Naive thymus-derived CD4-positive, alpha-beta T cell (primary cell): ENCODE measurements at regions of chr7 and their contacts with region 1.

Region 1: DNA sequence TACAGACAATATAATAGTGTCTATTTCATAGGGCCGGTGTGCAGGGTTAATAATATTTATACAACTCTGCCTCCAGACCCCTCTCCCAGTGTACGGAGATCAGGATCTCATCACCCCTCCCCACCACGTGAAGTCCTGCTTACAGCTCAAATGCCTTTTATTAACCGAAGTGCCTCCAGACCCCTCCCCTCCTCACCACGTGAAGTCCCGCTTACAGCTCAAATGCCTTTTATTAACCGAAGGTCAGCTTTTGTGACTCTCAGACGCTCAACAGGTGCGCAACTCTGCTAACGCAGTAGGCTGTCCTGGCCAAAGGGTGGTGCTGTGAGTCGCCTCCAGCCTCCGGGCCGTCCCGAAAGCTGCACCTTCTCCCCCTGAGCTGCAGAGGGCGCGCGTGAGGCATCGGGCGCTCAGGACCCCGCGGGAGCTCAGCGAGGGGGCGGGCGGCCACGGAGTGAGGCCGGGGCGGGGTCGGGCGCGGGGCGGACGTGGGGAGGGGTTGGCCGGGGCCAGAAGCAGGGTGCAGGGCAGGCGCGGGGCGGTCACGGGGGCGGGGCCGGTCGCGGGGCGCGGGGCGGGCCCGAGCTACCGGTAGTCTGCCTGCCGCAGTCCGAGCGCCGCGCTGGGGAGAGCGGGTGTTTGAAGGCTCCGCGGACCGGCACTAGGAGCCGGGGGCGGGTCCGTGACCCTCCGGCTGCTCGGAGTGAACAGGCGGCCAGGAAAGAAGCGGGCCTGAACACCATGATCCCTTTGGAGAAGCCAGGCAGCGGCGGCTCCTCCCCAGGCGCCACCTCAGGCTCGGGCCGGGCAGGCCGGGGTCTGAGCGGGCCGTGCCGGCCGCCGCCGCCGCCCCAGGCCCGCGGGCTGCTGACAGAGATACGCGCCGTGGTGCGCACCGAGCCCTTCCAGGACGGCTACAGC is at the start of gene STK17A:
- DNase-seq: peak; percentile 91 to 100 (median 95)
- ATAC-seq: peak; percentile 93
- H3K4me3 ChIP-seq: peak within 1 kb of the TSS; percentile 79
- H3K4me3 Mint-ChIP-seq: peak within 1 kb of the TSS; percentile 96 to 100 (median 98)
- H3K27ac ChIP-seq: peak within 1 kb of the TSS; percentile 96
- H3K27ac Mint-ChIP-seq: peak within 1 kb of the TSS; percentile 89 to 100 (median 95)
- H3K4me1 ChIP-seq: peaks cover 8 to 10% of the 10 kb centered on the region in 2 donors
- H3K4me1 Mint-ChIP-seq: peaks cover 10 to 33% (median 13%) of the 10 kb centered on the region in 7 donors
- H3K27me3 ChIP-seq: no peaks in the 10 kb centered on the region
- H3K27me3 Mint-ChIP-seq: peaks cover 0 to 22% (median 6%) of the 10 kb centered on the region in 5 donors
- total RNA-seq, gene STK17A: 71.3 to 132 (median 95.8) TPM

Region 2: DNA sequence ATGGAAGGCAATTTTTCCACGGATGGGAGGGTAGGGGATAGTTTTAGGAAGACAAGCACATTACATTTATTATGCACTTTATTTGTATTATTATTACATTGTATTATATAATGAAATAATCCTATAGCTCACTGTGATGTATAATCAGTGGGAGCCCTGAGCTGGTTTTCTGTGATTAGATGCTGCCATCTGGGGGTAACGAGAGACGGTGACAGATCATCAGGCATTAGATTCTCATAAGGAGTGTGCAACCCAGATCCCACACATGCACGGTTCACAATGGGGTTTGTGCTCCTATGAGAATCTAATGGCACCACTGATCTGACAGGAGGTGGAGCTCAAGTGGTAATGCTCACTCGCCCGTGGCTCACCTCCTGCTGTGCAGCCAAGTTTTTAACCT is 103.7 kb before region 1 on chr7:
- CTCF ChIA-PET with region 1: no interaction called
- POLR2A ChIA-PET with region 1: no interaction called
- intact Hi-C with region 1: no loop called
- DNase-seq: no peak
- ATAC-seq: no peak
- H3K4me3 ChIP-seq: no peak overlapping the region
- H3K4me3 Mint-ChIP-seq: no peak overlapping the region
- H3K27ac ChIP-seq: no peak overlapping the region
- H3K27ac Mint-ChIP-seq: no peak overlapping the region
- H3K4me1 ChIP-seq: no peaks in the 10 kb centered on the region
- H3K4me1 Mint-ChIP-seq: peaks cover 0 to 3% (median 0%) of the 10 kb centered on the region in 7 donors
- H3K27me3 ChIP-seq: no peaks in the 10 kb centered on the region
- H3K27me3 Mint-ChIP-seq: peaks cover 0 to 24% (median 0%) of the 10 kb centered on the region in 5 donors

Region 3: GRCh38 chr7:43602271-43602670 is 19.5 kb after region 1 on chr7:
- CTCF ChIA-PET with region 1: interaction called, 26 read pairs
- POLR2A ChIA-PET with region 1: interaction called, 17 read pairs
- intact Hi-C with region 1: loop called (anchors 2 kb)
- DNase-seq: no peak
- ATAC-seq: no peak
- H3K4me3 ChIP-seq: no peak overlapping the region
- H3K4me3 Mint-ChIP-seq: no peak overlapping the region
- H3K27ac ChIP-seq: peak overlapping the region; percentile 49
- H3K27ac Mint-ChIP-seq: no peak overlapping the region
- H3K4me1 ChIP-seq: peaks cover 63 to 65% of the 10 kb centered on the region in 2 donors
- H3K4me1 Mint-ChIP-seq: peaks cover 26 to 50% (median 29%) of the 10 kb centered on the region in 7 donors
- H3K27me3 ChIP-seq: no peaks in the 10 kb centered on the region
- H3K27me3 Mint-ChIP-seq: no peaks in the 10 kb centered on the region

Region 4: DNA sequence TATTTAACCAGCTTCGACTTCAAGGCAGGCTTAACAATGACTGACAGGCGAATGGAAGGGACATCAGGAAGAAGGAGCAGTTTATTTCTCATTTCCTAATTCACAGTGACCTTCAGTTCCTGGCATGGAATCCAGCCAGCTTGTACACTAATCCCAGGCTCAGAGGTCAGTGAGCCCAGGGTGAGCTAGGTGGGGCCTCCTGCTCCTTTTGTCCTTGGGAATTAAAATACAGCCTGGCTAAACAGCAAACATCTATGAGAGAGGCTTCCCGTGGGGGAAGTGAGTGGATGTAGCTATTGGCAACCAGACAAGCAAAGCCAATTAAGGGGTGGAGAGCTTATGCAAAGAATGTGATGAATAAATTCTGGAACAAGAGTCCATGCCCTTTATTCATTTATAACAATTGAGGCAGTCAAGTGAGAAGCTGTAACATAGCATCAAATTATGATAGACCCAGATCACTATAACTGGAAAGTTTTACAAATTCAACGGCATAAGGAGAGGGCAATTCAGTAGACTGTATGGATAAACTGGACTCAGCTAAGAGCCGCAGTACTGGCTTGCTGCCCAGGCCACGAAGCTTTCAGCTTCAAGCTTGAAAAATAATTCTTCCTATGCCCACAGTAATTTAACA is 57.2 kb after region 1 on chr7:
- CTCF ChIA-PET with region 1: interaction called, 99 read pairs
- POLR2A ChIA-PET with region 1: interaction called, 132 read pairs
- intact Hi-C with region 1: no loop called
- DNase-seq: no peak
- ATAC-seq: no peak
- H3K4me3 ChIP-seq: no peak overlapping the region
- H3K4me3 Mint-ChIP-seq: peak overlapping the region in 9 of 10 donors; percentile 4 to 58 (median 39)
- H3K27ac ChIP-seq: peak overlapping the region; percentile 59
- H3K27ac Mint-ChIP-seq: peak overlapping the region in 7 of 9 donors; percentile 90 to 100 (median 93)
- H3K4me1 ChIP-seq: peaks cover 69 to 86% of the 10 kb centered on the region in 2 donors
- H3K4me1 Mint-ChIP-seq: peaks cover 48 to 100% (median 96%) of the 10 kb centered on the region in 7 donors
- H3K27me3 ChIP-seq: no peaks in the 10 kb centered on the region
- H3K27me3 Mint-ChIP-seq: no peaks in the 10 kb centered on the region

Region 5: DNA sequence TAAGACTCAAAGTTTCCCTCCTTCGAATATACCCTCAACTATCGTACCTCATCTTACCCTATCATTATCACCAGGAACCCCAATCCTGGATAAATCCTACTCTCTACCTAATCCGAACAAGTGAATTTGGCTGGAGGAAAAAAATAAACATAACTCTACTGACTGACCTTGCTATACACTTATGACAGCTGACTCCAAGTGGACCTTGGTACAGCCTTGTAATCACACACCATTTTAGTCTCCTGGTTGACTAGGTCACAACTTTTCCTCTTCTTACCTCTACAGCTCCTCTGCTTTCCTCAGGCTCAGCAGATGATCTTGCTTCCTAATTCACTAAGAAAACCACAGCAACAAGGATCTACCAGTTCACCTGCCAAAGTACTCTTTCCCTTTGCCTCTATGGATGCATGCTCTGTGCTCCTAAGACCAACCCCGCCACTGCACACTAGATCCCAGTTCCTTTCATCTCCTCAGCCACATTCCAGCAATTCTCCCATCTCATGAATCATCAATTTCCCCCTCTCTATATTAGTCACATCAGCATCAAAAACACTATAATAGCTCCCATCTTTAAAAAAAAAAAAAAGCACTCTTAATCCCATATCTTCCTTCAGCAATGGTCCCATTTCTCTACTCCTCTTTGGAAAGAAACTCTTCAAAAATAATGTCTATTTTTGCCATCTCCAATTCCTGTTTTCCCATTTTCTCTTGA is 111.1 kb after region 1 on chr7:
- CTCF ChIA-PET with region 1: interaction called, 440 read pairs
- POLR2A ChIA-PET with region 1: interaction called, 185 read pairs
- intact Hi-C with region 1: no loop called
- DNase-seq: no peak
- ATAC-seq: no peak
- H3K4me3 ChIP-seq: no peak overlapping the region
- H3K4me3 Mint-ChIP-seq: no peak overlapping the region
- H3K27ac ChIP-seq: no peak overlapping the region
- H3K27ac Mint-ChIP-seq: no peak overlapping the region
- H3K4me1 ChIP-seq: peaks cover 12 to 37% of the 10 kb centered on the region in 2 donors
- H3K4me1 Mint-ChIP-seq: peaks cover 14 to 42% (median 21%) of the 10 kb centered on the region in 7 donors
- H3K27me3 ChIP-seq: no peaks in the 10 kb centered on the region
- H3K27me3 Mint-ChIP-seq: no peaks in the 10 kb centered on the region

Region 6: DNA sequence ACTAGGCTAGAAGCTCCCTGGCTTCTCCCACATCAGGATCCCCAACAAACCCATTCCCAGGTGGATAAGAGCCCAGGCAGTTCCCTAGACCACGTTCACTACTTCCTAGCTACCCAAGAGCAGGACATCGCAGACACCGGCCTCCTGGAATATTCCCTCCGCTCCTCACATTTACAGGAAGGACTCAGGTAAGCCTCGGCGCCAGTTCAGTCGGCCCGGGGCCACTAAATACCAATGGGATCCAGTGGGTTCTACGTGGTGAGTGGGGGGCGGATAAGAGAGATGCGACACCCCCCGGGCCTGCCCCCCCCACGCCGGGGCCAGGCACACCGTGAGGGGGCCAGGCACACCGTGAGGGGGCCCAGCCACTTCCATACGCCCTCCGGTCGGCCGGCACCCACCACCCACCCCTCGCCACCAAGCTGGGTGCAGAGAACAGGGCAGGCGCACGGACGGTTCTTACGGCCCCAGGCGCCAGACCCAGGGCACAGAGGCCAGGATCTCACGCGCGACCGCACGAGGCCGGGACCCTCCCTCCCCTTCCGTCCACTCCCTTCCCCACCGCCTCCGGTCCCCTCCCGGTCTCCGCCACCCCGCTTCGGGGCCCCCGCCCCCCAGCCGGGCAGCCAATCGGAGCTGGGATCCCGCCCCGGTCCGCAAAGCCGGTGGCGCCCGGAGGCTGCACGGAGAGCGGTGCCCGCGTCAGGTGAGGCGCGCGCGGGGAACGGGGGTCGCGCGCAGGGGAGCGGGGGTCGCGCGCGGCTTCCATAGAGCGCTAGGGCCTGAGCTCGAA is 175.5 kb after region 1 on chr7 and contains the start of gene BLVRA:
- CTCF ChIA-PET with region 1: interaction called, 3 read pairs
- POLR2A ChIA-PET with region 1: interaction called, 5 read pairs
- intact Hi-C with region 1: loop called in 1 of 2 experiments (anchors 1 kb)
- DNase-seq: peak; percentile 55 to 82 (median 66)
- ATAC-seq: peak; percentile 88
- H3K4me3 ChIP-seq: peak within 1 kb of the TSS; percentile 90
- H3K4me3 Mint-ChIP-seq: peak within 1 kb of the TSS; percentile 72 to 93 (median 89)
- H3K27ac ChIP-seq: peak within 1 kb of the TSS; percentile 77
- H3K27ac Mint-ChIP-seq: peak within 1 kb of the TSS; percentile 72 to 94 (median 88)
- H3K4me1 ChIP-seq: peaks cover 3 to 5% of the 10 kb centered on the region in 2 donors
- H3K4me1 Mint-ChIP-seq: peaks cover 24 to 48% (median 36%) of the 10 kb centered on the region in 7 donors
- H3K27me3 ChIP-seq: no peaks in the 10 kb centered on the region
- H3K27me3 Mint-ChIP-seq: peaks cover 0 to 10% (median 0%) of the 10 kb centered on the region in 5 donors
- total RNA-seq, gene BLVRA: 11.2 to 41.2 (median 16.1) TPM

Region 7: DNA sequence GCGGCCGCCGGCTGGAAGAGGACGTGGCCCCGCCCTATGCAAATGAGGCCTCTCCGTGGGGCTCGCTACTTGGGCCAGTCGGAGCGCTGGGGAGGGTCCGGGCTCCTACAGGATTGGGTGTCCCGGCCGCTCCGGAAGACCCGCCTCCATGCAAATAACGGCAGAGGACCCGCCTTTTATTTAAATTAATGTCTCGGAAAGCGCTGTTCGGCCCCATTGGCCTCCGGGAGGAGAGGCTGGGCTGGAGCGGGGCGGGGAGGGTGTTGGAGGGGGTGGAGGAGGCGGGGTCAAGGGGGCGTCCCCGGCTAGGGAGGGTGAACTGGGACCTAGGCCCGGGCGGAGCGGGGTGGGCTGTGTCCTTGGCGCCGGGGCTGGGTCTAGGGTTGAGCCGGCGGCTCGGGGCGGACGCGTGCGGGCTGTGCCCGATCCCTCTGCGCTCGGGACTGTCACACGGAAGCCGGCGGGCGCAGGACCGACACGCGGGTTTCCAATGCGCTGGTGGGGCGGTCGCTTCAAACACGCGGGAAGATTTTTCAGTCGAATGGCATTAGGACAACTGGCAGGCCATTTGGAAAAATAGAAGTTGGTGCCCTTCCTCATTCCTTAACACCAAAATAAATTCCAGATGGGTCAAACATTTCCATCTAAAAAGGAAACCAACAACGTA is 499.9 kb after region 1 on chr7:
- CTCF ChIA-PET with region 1: no interaction called
- POLR2A ChIA-PET with region 1: no interaction called
- intact Hi-C with region 1: loop called in 1 of 2 experiments (anchors 2 kb)
- DNase-seq: peak; percentile 88 to 99 (median 98)
- ATAC-seq: peak; percentile 96
- H3K4me3 ChIP-seq: peak overlapping the region; percentile 59
- H3K4me3 Mint-ChIP-seq: peak overlapping the region; percentile 79 to 91 (median 87)
- H3K27ac ChIP-seq: peak overlapping the region; percentile 92
- H3K27ac Mint-ChIP-seq: peak overlapping the region; percentile 44 to 95 (median 80)
- H3K4me1 ChIP-seq: peaks cover 15 to 16% of the 10 kb centered on the region in 2 donors
- H3K4me1 Mint-ChIP-seq: peaks cover 11 to 30% (median 18%) of the 10 kb centered on the region in 7 donors
- H3K27me3 ChIP-seq: no peaks in the 10 kb centered on the region
- H3K27me3 Mint-ChIP-seq: peaks cover 0 to 4% (median 0%) of the 10 kb centered on the region in 5 donors